ENCODE measurements at regions of chr9 and their contacts with region 1.

Region 1: DNA sequence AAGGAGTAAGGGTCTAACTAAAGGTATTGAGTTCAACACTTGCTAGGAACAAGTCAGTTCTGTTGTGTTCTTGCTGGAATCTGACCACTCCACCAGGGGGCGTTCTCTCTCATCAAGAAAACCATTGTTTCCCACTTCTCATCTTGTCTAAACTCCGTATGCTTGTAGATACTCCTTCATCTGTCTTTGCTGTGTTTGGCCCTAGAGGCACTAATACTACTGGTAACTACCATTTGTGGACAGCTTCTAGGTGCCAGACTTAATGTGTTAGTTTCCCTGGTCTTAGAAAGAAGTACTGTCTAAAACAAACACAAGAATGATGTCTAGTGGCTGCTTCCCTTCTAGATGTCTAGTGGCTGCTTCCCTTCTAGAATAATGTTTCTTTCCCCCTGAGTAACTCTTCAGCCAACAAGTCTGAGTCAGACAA is 18.7 kb upstream of the PTPDC1 start:
- DNase-seq: peak; percentile 67
- H3K4me3 Mint-ChIP-seq: no peak overlapping the region
- H3K27ac Mint-ChIP-seq: no peak overlapping the region
- H3K4me1 Mint-ChIP-seq: no peaks in the 10 kb centered on the region
- H3K27me3 Mint-ChIP-seq: no peaks in the 10 kb centered on the region
- CTCF ChIP-seq: peak; percentile 51

Region 2: DNA sequence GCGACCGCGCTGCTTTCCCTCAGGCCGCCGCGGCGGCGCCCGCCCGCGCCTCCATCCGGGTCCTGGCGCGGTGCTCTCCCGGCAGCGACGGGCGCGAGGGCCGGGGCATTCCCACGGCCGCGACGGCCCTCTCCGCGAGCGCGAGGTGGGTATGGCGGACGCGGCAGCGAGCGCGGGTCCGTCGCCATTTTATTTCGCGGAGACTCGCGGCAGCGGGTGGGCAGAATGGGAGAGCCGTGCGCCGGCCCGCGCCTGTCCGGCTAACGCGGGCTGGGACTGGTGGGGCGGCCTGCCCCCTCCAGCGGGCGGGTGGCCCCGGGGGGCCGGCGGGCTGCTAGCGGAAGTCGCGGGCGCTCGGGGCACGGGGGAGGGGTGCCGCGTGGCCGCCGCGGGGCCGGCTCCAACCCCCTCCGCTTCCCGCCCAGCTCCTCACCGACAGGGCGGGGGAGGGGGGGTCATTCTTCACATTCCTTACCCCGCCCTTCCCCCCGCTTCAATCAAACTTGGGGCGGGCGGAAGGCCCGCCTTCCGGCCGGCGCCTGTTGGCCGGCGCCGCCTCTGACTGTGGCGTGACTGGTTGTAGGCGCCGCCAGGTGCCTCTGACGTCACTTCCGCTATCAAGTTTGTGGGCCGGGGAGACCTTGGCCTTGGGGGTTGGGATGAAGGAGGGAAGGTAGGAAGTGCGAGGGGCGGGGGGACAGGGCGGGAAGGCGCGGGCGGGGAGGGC is 100.9 kb after region 1 on chr9:
- CTCF ChIA-PET with region 1: interaction called, 4 read pairs
- intact Hi-C with region 1: loop called (anchors 5 kb)
- DNase-seq: peak; percentile 93
- H3K4me3 Mint-ChIP-seq: peak overlapping the region; percentile 83
- H3K27ac Mint-ChIP-seq: peak overlapping the region; percentile 89
- H3K4me1 Mint-ChIP-seq: peaks cover 17% of the 10 kb centered on the region
- H3K27me3 Mint-ChIP-seq: no peaks in the 10 kb centered on the region
- CTCF ChIP-seq: no peak

Region 3: GRCh38 chr9:94213511-94214124 is 148.1 kb after region 1 on chr9:
- CTCF ChIA-PET with region 1: interaction called, 7 read pairs
- intact Hi-C with region 1: loop called (anchors 1 kb)
- DNase-seq: peak; percentile 60
- H3K4me3 Mint-ChIP-seq: no peak overlapping the region
- H3K27ac Mint-ChIP-seq: no peak overlapping the region
- H3K4me1 Mint-ChIP-seq: peaks cover 8% of the 10 kb centered on the region
- H3K27me3 Mint-ChIP-seq: peaks cover 5% of the 10 kb centered on the region
- CTCF ChIP-seq: peak; percentile 24

Measured in Calu3 (cell line).